Aorta (tissue), 5 donors: ENCODE measurements at regions of chr16 and their contacts with region 1.

Region 1: GRCh38 chr16:55543472-55543871 is 23.0 kb upstream of the CAPNS2 start:
- DNase-seq: no peak
- ATAC-seq: peak; percentile 85
- H3K4me3 ChIP-seq: no peak overlapping the region
- H3K27ac ChIP-seq: no peak overlapping the region
- H3K4me1 ChIP-seq: no peaks in the 10 kb centered on the region
- H3K27me3 ChIP-seq: no peaks in the 10 kb centered on the region

Region 2: GRCh38 chr16:55250701-55251100 is 292.8 kb before region 1 on chr16:
- intact Hi-C with region 1: no loop called
- DNase-seq: no peak
- ATAC-seq: no peak
- H3K4me3 ChIP-seq: no peak overlapping the region
- H3K27ac ChIP-seq: no peak overlapping the region
- H3K4me1 ChIP-seq: no peaks in the 10 kb centered on the region
- H3K27me3 ChIP-seq: no peaks in the 10 kb centered on the region

Region 3: DNA sequence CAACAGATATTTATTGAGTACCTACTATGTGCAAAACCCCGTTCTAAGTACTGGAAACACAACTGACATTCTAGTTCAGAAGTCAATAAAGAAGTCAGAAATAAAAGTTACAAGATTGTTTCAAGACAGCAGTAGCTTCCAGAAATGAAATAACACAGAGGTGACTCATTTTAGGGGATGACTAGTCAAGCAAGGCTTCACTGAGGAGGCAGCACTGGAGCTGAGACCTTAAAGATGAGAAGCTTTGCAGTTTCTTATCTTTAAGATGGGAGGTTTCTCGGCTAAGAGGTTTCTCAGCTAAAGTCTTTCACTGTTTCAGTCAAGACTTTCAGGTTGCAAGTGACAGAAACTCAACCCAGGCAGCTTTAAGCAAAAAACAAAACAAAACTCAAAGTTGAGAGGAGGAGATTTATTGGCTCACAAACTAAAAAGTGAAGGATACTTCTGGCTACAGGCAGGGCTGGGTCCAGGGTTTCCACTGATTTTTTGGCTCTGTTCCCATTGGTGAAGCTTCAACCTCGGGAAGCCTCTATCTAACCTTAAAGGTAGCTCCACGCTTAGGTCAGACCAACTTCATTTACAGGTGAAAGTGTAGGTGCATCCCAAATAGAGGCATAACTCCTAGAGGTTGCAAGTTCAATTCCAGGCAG is 71.9 kb before region 1 on chr16:
- intact Hi-C with region 1: loop called in 1 of 2 experiments (anchors 2 kb)
- DNase-seq: peak in 1 of 2 donors; percentile 28
- ATAC-seq: no peak
- H3K4me3 ChIP-seq: no peak overlapping the region
- H3K27ac ChIP-seq: peak overlapping the region in 1 of 2 donors; percentile 35
- H3K4me1 ChIP-seq: peaks cover 0 to 2% of the 10 kb centered on the region in 2 donors
- H3K27me3 ChIP-seq: no peaks in the 10 kb centered on the region

Region 4: DNA sequence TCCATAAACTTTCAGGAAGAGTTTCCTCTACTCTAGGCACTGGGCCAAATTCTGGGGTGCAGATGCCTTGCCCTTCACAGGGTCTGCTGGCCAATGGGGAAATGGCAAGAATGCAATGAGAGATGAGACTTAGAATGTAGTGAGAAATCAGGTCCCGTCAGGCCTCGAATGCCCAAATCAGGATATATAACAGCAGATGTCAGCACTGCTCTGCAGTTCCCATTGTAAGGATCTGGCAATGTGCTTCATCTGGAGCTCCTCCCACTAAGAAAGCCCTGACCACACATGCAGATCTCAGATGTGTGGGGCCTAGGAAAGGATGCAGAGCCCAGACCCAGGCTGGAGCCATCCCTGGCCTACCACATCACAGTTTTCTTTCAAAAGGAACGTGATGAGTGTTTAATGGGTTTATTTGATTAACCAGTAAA is 48.5 kb before region 1 on chr16:
- intact Hi-C with region 1: loop called in 1 of 2 experiments (anchors 5 kb)
- DNase-seq: no peak
- ATAC-seq: peak; percentile 64
- H3K4me3 ChIP-seq: no peak overlapping the region
- H3K27ac ChIP-seq: no peak overlapping the region
- H3K4me1 ChIP-seq: no peaks in the 10 kb centered on the region
- H3K27me3 ChIP-seq: no peaks in the 10 kb centered on the region

Region 5: GRCh38 chr16:55842369-55843104 is 299.1 kb after region 1 on chr16:
- intact Hi-C with region 1: loop called in 1 of 2 experiments (anchors 10 kb)
- DNase-seq: no peak
- ATAC-seq: peak; percentile 63
- H3K4me3 ChIP-seq: no peak overlapping the region
- H3K27ac ChIP-seq: no peak overlapping the region
- H3K4me1 ChIP-seq: no peaks in the 10 kb centered on the region
- H3K27me3 ChIP-seq: peaks cover 0 to 2% of the 10 kb centered on the region in 2 donors